Activated naive CD4-positive, alpha-beta T cell treated with anti-CD3 and anti-CD28 coated beads for 36 hours (primary cell): ENCODE measurements at regions of chr18 and their contacts with region 1.

Region 1: DNA sequence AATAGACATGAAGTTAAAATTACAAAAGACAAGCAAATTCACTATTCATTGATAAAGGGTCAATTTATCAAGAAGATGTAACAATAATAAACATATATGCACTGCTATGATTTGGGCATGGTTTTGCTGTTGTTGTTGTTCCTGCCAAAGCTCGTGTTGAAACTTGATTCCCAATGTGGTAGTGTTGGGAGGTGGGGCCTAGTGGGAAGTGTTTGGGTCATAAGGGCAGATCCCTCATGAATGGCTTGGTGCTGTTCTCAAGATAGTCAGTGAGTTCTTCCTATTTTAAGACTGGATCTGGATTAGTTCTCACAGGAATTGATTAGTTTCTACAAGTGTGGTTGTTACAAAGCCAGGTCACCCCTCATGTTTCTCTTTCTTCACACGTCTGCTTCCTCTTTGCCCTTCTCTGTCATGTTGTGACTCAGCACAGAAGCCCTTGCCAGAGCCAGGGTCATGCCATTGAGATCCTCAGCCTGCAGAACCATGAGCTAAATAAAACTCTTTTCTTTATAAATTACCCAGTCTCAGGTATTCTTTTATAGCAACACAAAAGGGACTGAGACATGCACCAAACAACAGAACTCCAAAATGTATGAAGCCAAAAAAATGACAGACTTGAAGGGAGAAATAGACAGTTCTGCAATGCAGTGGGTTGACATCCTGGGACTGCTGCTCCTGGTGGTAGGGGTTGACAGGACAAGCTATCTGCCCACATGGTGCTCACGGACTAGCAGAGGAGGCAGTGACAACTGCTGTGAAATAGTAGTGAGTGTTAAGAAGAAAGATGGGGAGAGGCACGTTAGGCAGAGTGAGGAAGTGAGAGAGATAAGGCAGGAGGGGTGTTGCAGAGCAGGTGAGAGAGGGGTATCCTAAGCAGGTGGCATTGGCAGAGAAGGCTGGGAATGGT is 18.6 kb upstream of the SKA1 start:
- DNase-seq: no peak
- H3K4me3 Mint-ChIP-seq: no peak overlapping the region
- H3K27ac Mint-ChIP-seq: no peak overlapping the region
- H3K4me1 Mint-ChIP-seq: peaks cover 8% of the 10 kb centered on the region
- H3K27me3 Mint-ChIP-seq: peaks cover 5% of the 10 kb centered on the region

Region 2: GRCh38 chr18:49858309-49859020 is 497.8 kb before region 1 on chr18:
- CTCF ChIA-PET with region 1: interaction called, 5 read pairs
- intact Hi-C with region 1: loop called (anchors 5 kb)
- DNase-seq: peak; percentile 73
- H3K4me3 Mint-ChIP-seq: no peak overlapping the region
- H3K27ac Mint-ChIP-seq: no peak overlapping the region
- H3K4me1 Mint-ChIP-seq: no peaks in the 10 kb centered on the region
- H3K27me3 Mint-ChIP-seq: no peaks in the 10 kb centered on the region

Region 3: DNA sequence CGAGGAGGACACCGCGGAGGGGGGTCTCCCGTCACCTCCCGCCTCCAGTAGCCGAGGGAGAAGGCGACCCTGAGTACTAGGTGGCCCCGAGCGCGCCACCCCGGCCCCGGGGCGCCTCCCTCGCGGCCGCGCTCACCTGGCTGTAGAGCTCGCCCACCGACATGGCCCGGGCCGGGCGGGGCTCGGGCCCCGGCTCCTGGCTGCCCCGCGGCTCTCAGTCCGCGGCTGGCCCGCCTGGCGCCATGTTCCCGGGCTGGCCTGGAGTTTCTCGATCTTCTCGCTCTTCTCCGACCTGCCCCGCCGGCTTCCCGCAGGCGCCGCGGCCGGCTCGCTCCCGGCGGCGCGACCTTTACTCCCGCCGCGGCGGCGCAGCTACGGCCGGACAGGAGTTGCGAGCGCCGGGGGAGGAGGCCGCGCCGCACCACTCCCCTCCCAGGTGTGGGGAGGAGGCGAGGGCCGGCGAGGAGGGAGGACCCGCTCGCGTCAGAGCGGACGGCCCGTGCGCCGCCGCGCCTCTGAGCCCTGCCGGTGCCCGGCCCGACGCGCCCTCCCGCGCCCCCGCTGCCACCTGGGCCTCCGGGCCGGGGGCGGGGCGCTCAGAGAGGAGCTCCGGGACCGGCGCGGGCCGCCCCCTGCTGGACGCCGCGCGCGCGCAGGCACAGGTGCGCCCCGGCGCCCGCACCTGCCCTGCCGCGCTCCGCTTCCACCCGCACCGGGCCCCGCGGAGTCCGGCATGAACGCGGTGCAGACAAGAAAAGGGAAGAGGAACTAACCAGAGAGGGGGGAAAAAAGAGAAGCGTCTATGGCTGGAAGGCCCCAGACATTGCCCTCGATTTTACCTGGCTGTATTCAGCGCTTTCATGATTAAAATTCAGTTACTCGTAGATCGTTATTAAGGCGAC is 161.4 kb before region 1 on chr18 and contains the start of gene MYO5B:
- CTCF ChIA-PET with region 1: interaction called, 12 read pairs
- intact Hi-C with region 1: loop called (anchors 5 kb)
- DNase-seq: peak; percentile 53
- H3K4me3 Mint-ChIP-seq: peak within 1 kb of the TSS; percentile 57
- H3K27ac Mint-ChIP-seq: no peak within 1 kb of the TSS
- H3K4me1 Mint-ChIP-seq: peaks cover 13% of the 10 kb centered on the region
- H3K27me3 Mint-ChIP-seq: peaks cover 51% of the 10 kb centered on the region
- total RNA-seq, gene MYO5B: 0.02 to 0.12 TPM

Region 4: GRCh38 chr18:50218432-50219197 is 137.7 kb before region 1 on chr18:
- CTCF ChIA-PET with region 1: interaction called, 76 read pairs
- intact Hi-C with region 1: loop called (anchors 1 kb)
- DNase-seq: peak; percentile 59
- H3K4me3 Mint-ChIP-seq: no peak overlapping the region
- H3K27ac Mint-ChIP-seq: no peak overlapping the region
- H3K4me1 Mint-ChIP-seq: no peaks in the 10 kb centered on the region
- H3K27me3 Mint-ChIP-seq: peaks cover 18% of the 10 kb centered on the region

Region 5: DNA sequence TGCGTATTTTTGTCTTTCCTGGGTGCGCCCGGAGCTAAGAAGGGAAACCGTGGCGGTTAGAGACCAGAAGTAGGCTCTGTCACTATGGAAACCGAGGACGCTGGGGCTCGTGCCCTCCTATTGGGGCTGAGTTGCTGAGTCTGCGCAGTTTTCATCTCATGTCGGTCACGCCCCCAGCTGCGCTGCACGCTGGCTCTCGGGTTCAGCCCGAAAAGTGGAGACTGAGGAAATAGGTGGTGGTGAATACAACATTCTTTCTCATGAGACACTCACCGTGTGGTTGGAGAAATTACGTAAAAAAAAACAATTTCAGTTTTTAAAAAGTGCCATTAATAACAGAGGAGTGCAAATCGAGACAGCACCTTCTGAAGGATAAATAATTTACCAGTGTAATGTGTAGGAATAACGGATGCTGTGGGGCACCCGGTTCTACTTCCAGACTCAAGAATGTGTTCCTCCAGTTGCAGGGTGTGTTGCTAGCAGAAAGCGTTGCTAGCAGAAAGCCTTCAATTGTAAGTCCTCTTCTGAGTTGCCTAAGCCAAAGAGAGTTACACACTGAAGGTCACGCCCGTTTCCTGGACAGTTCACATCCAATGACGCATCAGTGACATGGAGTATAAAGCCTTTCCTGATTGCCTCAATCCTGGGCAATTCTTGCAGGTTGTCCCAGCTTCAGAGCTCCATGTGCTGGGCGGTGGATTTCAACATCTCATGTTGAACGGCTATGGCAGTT is 48.4 kb before region 1 on chr18:
- CTCF ChIA-PET with region 1: interaction called, 9 read pairs
- intact Hi-C with region 1: loop called (anchors 5 kb)
- DNase-seq: peak; percentile 96
- H3K4me3 Mint-ChIP-seq: peak overlapping the region; percentile 85
- H3K27ac Mint-ChIP-seq: peak overlapping the region; percentile 52
- H3K4me1 Mint-ChIP-seq: peaks cover 10% of the 10 kb centered on the region
- H3K27me3 Mint-ChIP-seq: peaks cover 11% of the 10 kb centered on the region

Region 6: DNA sequence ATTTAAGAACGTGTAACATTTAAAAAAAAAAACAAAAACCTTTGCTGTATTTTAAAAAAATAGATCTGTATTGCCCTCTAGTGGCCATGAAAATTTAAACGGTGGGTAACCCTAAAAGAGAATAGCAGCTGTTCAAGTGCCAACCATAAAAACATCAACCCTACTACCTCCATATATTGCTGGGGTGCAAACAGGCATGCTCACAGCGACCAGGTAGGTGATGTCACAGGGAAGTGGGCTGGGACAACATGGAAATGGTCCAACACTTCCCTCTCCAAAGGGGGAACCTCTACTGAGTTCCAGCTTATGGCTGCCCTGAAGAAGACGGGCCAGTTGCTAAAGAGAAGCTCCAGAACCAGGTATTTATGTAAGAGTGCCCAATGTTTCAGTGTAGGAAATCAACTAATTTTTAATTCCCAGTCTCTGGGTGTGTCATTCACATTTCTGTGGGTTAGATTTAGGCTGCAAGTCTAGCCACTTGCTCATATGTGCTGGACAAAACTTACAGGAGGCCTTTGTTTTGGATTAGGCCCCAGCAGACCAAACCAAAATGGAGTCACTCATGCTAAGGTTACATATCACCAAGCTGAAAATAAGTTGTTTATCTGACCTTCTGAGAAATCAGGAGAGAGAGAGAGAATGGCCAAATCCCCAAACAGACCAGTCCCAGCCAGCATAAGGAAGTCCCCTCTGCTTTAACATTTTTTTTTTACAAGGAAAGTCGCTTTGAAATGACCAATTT is 73.1 kb after region 1 on chr18:
- CTCF ChIA-PET with region 1: interaction called, 15 read pairs
- intact Hi-C with region 1: loop called (anchors 1 kb)
- DNase-seq: no peak
- H3K4me3 Mint-ChIP-seq: no peak overlapping the region
- H3K27ac Mint-ChIP-seq: no peak overlapping the region
- H3K4me1 Mint-ChIP-seq: no peaks in the 10 kb centered on the region
- H3K27me3 Mint-ChIP-seq: peaks cover under 1% of the 10 kb centered on the region